Heart right ventricle (tissue), 16 donors: ENCODE measurements at regions of chr11 and their contacts with region 1.

Region 1: DNA sequence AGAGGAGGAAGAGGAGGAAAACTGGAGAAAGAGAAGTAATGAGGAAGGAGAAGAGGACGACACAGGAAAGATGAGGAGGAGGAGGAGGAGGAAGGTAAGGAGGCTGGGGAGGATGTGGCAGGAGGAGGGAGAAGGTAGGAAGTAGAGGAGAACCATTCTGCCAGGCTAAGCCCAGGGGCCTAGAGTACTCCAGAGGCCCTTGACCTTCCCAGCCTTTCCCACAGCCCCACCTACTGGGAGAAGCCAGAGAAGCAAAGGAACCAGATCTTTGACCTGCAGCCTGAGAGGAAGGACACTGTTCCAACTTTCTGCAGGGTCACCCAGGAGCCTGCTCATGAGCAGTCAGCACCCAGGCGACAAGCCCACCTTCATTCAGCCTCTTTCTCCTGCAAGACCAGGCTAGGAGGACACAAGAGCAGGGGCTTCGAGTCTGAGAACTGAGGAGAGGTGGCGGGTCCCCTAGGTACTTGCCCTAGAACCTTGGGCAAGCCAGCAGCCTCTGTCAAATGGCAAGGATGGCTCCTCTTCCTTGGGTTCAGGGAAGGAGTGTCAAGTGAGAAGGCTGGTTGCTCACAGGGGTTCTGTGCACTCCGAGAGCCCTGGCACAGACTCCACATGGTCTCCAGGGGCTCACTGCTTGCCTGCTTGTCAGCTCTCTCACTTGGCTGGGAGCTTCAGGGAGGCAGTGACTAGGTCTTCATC is 27.9 kb upstream of the OAF start:
- DNase-seq: peak; percentile 51 to 52
- ATAC-seq: no peak
- H3K4me3 ChIP-seq: no peak overlapping the region
- H3K27ac ChIP-seq: peak overlapping the region in 9 of 10 donors; percentile 2 to 88 (median 84)
- H3K4me1 ChIP-seq: peaks cover 5 to 92% (median 43%) of the 10 kb centered on the region in 9 donors
- H3K27me3 ChIP-seq: no peaks in the 10 kb centered on the region
- CTCF ChIP-seq: peak in 7 of 9 donors; percentile 25 to 57 (median 48)

Region 2: GRCh38 chr11:120210626-120211521 is 27.9 kb after region 1 on chr11 and contains the start of gene OAF:
- intact Hi-C with region 1: loop called in 3 of 10 experiments (anchors 2 to 5 kb)
- DNase-seq: peak; percentile 77 to 82
- ATAC-seq: peak; percentile 81 to 90 (median 84)
- H3K4me3 ChIP-seq: peak within 1 kb of the TSS; percentile 55 to 89 (median 76)
- H3K27ac ChIP-seq: peak within 1 kb of the TSS; percentile 61 to 92 (median 84)
- H3K4me1 ChIP-seq: peaks cover 4 to 71% (median 49%) of the 10 kb centered on the region in 9 donors
- H3K27me3 ChIP-seq: peaks cover 0 to 7% (median 0%) of the 10 kb centered on the region in 7 donors
- CTCF ChIP-seq: peak in 6 of 9 donors; percentile 11 to 48 (median 40)
- total RNA-seq, gene OAF: 8.4 to 41.6 (median 13.8) TPM